ENCODE measurements at regions of chr1 and their contacts with region 1.

Region 1: DNA sequence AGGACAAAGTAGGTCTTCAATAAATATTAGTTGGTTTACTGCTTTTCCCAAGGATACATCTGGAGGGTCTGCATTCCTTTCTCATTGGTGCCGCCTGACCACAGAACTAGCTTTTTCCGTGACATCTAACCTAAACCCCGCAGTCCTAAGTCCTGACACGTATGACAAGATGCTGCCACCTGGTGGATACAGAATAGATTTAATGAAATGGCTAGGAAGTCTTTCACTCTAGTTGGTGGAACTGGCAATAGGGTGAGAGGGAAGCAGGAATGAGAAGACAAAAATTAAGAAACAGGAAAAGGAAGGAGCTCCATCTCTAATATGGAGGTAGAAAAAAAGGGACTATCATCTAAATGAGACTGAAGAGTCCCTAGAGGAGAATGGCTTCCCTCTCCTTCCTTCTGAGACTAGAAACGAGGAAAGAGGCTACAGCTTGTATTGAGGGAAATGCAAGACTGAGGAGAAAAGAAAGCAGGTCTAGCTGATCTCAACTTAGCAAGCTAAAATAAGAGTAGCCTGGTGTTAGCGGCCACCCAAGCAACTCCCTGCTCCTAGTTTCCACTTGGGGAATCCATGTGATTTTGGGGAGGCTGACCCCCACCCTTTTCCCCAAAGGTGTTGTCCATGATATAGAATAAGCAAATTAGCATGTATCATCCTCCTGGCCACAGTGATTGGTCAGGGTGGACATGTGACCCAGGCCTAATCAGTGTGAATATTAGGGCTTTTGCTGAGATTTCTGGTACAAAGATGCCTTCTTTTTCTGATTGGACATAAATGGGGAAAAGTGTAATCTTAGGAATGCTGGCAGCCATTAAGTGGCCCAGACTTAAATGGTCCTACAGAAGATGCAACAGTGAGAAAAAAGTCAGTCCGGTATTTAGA is 5.9 kb downstream of the RFX5 start:
- DNase-seq: peak; percentile 67
- ATAC-seq: peak; percentile 82
- H3K4me3 Mint-ChIP-seq: no peak overlapping the region
- H3K27ac Mint-ChIP-seq: peak overlapping the region; percentile 46
- H3K4me1 Mint-ChIP-seq: peaks cover 26% of the 10 kb centered on the region
- H3K27me3 Mint-ChIP-seq: no peaks in the 10 kb centered on the region
- CTCF ChIP-seq: peak; percentile 86

Region 2: GRCh38 chr1:151198255-151199127 is 142.6 kb before region 1 on chr1 and contains the start of gene PIP5K1A:
- CTCF ChIA-PET with region 1: interaction called, 3 read pairs
- POLR2A ChIA-PET with region 1: no interaction called
- intact Hi-C with region 1: loop called (anchors 5 kb)
- DNase-seq: peak; percentile 99
- ATAC-seq: peak; percentile 86
- H3K4me3 Mint-ChIP-seq: peak within 1 kb of the TSS; percentile 98
- H3K27ac Mint-ChIP-seq: peak within 1 kb of the TSS; percentile 98
- H3K4me1 Mint-ChIP-seq: peaks cover 33% of the 10 kb centered on the region
- H3K27me3 Mint-ChIP-seq: no peaks in the 10 kb centered on the region
- CTCF ChIP-seq: no peak
- total RNA-seq, gene PIP5K1A: 63.1 to 66.1 TPM

Region 3: DNA sequence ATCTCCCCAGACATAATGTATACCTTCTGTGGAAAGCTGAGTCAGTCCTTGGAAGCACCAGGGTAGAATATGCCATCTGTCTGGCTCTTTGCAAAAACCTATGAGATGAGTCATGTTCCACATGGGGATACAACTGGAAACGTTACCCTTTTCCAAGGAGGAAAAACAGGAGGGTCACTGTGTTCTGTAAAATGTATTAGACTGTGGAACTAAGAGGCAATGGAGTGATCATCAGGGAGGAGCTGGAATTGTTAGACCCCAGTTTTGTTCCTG is 102.7 kb before region 1 on chr1:
- CTCF ChIA-PET with region 1: no interaction called
- POLR2A ChIA-PET with region 1: no interaction called
- intact Hi-C with region 1: no loop called
- DNase-seq: no peak
- ATAC-seq: no peak
- H3K4me3 Mint-ChIP-seq: no peak overlapping the region
- H3K27ac Mint-ChIP-seq: no peak overlapping the region
- H3K4me1 Mint-ChIP-seq: no peaks in the 10 kb centered on the region
- H3K27me3 Mint-ChIP-seq: no peaks in the 10 kb centered on the region
- CTCF ChIP-seq: no peak

Region 4: DNA sequence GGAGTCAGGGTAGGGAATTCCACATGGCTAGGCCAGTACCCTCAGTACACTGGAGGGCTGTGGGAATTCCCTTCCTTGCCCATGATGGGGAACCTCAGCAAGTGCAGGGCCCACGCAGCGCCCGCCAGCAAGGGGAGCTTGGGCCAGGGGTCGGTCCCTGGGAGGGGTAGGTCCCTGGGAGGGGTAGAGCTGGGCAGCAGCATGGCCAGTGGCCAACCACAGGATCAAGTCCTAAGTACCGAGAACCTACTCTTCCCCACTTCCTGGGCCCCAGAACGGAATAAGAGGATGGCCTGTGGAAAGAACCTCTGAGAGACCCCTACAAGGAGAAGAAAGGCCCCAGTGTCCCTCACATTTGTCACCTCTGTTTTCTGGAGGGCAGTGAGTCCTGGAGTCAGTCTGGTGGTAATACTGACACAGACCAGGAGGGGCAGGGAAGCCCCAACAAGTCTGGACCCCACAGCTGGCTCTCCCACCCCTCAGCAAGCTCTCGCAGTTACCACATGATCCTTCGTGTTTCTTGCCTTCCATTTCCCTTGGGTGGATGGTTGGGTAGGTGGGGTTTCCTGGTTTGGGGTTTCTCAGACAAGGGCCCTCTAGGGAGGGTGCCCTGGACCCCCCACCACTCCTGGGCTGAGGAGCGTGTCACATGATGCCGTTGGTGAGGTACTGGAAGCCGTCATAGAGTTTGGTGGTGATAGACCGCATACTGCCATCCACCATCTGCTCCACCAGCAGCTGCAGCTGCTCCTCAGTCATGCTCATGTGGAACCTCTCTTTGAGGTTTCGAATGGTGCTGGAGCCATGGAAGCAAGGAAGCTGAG is 48.7 kb before region 1 on chr1:
- CTCF ChIA-PET with region 1: interaction called, 238 read pairs
- POLR2A ChIA-PET with region 1: interaction called, 4 read pairs
- intact Hi-C with region 1: no loop called
- DNase-seq: peak; percentile 30
- ATAC-seq: peak; percentile 52
- H3K4me3 Mint-ChIP-seq: no peak overlapping the region
- H3K27ac Mint-ChIP-seq: peak overlapping the region; percentile 71
- H3K4me1 Mint-ChIP-seq: peaks cover 2% of the 10 kb centered on the region
- H3K27me3 Mint-ChIP-seq: no peaks in the 10 kb centered on the region
- CTCF ChIP-seq: peak; percentile 27

Region 5: GRCh38 chr1:151318745-151319374 is 22.3 kb before region 1 on chr1:
- CTCF ChIA-PET with region 1: interaction called, 179 read pairs
- POLR2A ChIA-PET with region 1: interaction called, 4 read pairs
- intact Hi-C with region 1: no loop called
- DNase-seq: no peak
- ATAC-seq: no peak
- H3K4me3 Mint-ChIP-seq: no peak overlapping the region
- H3K27ac Mint-ChIP-seq: no peak overlapping the region
- H3K4me1 Mint-ChIP-seq: peaks cover 20% of the 10 kb centered on the region
- H3K27me3 Mint-ChIP-seq: no peaks in the 10 kb centered on the region
- CTCF ChIP-seq: no peak

Region 6: DNA sequence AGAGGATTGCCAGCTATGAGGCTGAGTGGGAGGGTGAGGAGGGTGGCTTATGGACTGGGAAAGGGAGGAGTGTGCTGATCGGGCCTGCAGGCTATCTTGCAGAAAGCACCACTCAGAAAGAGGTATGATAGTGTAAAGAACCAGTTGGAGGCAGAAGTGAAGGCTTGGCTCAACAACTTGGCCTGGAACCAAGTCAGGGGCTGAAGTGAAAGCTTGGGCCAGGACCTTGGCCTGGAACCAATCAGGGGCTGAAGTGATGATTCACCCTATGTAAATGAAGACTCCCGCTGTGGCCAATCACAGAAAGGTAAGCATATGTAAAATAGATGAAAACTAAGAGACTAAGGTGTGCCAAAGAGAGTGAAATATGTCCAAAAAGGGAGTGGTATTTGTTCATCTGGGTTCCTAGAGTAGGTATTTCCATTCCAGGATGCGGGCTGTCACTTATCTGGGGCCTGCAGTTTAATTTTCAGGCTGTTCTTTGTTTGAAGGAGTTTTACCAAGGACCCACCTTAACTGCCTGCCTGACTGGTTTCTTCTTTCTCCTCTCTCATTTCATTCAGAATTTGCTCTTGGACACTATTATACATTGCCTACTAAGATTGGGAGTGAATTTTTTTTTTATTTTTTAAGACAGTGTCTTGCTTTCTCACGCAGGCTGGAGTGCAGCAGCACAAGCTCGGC is 11.0 kb after region 1 on chr1:
- CTCF ChIA-PET with region 1: interaction called, 38 read pairs
- POLR2A ChIA-PET with region 1: interaction called, 4 read pairs
- intact Hi-C with region 1: no loop called
- DNase-seq: no peak
- ATAC-seq: no peak
- H3K4me3 Mint-ChIP-seq: no peak overlapping the region
- H3K27ac Mint-ChIP-seq: no peak overlapping the region
- H3K4me1 Mint-ChIP-seq: peaks cover 10% of the 10 kb centered on the region
- H3K27me3 Mint-ChIP-seq: no peaks in the 10 kb centered on the region
- CTCF ChIP-seq: no peak

Region 7: DNA sequence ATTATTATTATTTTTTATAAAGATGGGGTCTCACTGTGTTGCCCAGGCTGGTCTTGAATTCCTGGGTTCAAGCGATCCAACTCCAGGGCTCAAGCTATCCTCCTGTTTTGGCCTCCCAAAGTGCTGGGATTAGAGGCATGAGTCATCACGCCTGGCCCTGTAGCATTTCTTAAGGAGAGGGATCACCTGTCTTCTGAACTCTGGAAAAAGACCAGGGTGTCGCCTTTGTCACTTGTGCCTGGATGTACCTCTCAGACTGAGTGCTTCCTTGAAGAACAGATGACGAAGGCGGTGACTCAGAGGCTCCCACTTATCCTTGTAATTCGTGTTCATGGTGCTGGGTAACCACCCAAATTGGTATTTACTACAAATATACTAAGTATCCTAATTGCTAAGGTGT is 167.7 kb after region 1 on chr1:
- CTCF ChIA-PET with region 1: no interaction called
- POLR2A ChIA-PET with region 1: no interaction called
- intact Hi-C with region 1: no loop called
- DNase-seq: no peak
- ATAC-seq: no peak
- H3K4me3 Mint-ChIP-seq: no peak overlapping the region
- H3K27ac Mint-ChIP-seq: no peak overlapping the region
- H3K4me1 Mint-ChIP-seq: peaks cover 23% of the 10 kb centered on the region
- H3K27me3 Mint-ChIP-seq: no peaks in the 10 kb centered on the region
- CTCF ChIP-seq: no peak

Measured in activated CD8-positive, alpha-beta T cell treated with anti-CD3 and anti-CD28 coated beads for 36 hours (primary cell).